Activated CD4-positive, alpha-beta memory T cell treated with anti-CD3 and anti-CD28 coated beads for 36 hours (primary cell): ENCODE measurements at regions of chr16 and their contacts with region 1.

Region 1: GRCh38 chr16:67935402-67936123 is 1.1 kb downstream of the PSMB10 start:
- DNase-seq: peak; percentile 98
- H3K4me3 Mint-ChIP-seq: peak overlapping the region; percentile 100
- H3K27ac Mint-ChIP-seq: peak overlapping the region; percentile 99
- H3K4me1 Mint-ChIP-seq: peaks cover 41% of the 10 kb centered on the region
- H3K27me3 Mint-ChIP-seq: no peaks in the 10 kb centered on the region

Region 2: GRCh38 chr16:67660564-67661028 is 275.0 kb before region 1 on chr16 and contains the start of gene PARD6A:
- CTCF ChIA-PET with region 1: no interaction called
- POLR2A ChIA-PET with region 1: no interaction called
- intact Hi-C with region 1: loop called (anchors 1 kb)
- DNase-seq: peak; percentile 98
- H3K4me3 Mint-ChIP-seq: peak within 1 kb of the TSS; percentile 86
- H3K27ac Mint-ChIP-seq: peak within 1 kb of the TSS; percentile 87
- H3K4me1 Mint-ChIP-seq: peaks cover 27% of the 10 kb centered on the region
- H3K27me3 Mint-ChIP-seq: no peaks in the 10 kb centered on the region
- total RNA-seq, gene PARD6A: 11.2 to 11.5 TPM

Region 3: GRCh38 chr16:67822511-67822910 is 113.1 kb before region 1 on chr16:
- CTCF ChIA-PET with region 1: no interaction called
- POLR2A ChIA-PET with region 1: no interaction called
- intact Hi-C with region 1: no loop called
- DNase-seq: no peak
- H3K4me3 Mint-ChIP-seq: no peak overlapping the region
- H3K27ac Mint-ChIP-seq: no peak overlapping the region
- H3K4me1 Mint-ChIP-seq: no peaks in the 10 kb centered on the region
- H3K27me3 Mint-ChIP-seq: no peaks in the 10 kb centered on the region

Region 4: DNA sequence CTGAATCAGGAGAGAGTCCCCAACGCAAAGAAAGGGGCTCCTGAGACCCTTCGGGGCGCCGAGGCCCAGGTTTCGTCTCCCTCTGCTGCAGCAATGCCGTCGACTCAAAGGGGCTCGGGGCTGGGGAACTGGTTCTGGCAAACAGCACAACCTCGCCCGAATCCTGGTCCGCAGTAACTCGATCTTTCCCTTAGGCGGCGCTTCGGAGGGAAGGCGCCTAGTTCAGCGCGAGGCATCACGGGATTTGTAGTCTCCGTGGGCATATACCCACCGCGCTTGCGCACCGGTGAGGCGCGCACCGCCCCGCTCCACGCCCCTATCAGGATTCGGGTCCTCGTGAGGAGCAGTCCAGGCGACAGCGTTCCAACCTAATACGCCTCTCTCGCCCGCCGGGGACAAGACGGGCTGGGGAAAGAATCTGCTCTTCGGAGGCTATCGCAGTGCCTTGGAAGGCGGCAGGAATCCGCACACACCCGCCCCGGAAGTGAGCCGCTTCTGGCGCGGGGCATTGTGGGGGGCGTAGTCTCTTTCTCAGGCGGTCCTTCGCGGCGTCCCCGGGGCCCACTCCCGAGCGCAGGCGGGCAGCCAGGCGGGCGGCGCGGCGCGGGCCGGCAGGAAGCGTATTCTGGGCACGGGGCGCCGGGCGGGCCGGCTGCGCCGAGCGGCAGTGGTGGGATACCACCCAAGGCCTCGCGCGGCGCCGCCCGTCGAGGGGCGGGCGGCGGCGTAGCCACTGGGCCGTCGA is 93.6 kb before region 1 on chr16 and contains the start of gene THAP11:
- CTCF ChIA-PET with region 1: interaction called, 3 read pairs
- POLR2A ChIA-PET with region 1: interaction called, 7 read pairs
- intact Hi-C with region 1: loop called (anchors 1 kb)
- DNase-seq: peak; percentile 97
- H3K4me3 Mint-ChIP-seq: peak within 1 kb of the TSS; percentile 90
- H3K27ac Mint-ChIP-seq: peak within 1 kb of the TSS; percentile 95
- H3K4me1 Mint-ChIP-seq: peaks cover 34% of the 10 kb centered on the region
- H3K27me3 Mint-ChIP-seq: no peaks in the 10 kb centered on the region
- total RNA-seq, gene THAP11: 31.8 to 32.1 TPM

Region 5: DNA sequence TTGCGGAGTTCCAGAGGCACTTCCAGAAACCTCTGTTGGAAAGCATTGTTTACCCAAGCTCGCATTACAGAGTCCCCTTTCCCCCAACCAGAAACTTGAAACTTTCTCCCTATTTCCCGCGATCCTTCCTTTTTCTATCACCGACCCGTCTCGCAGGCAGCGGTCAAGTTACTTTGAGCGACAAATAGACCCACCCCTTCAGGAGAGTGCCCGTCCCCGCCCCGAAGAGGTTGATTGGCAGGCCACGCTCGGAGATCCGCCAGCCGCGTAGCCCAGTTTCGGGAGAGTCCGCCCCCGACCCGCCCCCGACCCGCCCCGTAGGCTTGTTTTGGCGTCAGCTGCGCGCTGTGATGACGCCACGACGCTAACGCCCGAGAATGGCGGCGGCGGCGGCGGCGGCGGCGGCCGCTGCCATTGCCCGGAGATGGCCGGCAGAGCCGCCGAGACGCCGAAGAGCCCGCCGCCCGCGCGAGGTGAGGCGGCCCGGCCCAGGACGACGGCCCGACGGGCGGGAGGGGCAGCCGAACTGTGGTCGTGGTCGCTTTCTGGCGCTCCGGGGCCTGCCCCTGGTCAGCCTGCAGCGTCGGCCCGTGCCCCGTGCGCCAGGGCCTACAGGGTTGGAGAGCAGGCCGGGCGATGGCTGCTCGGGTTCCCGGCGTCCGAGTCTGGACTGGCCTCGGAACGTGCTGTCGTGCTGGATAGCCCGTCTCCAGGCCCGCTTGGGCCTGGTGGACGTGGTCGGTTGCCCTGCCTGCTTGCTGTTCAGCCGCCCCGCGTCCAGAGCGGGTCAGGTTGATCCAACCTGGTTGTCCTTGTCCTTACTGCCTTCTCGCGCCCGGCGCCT is 42.4 kb before region 1 on chr16 and contains the start of gene PSKH1:
- CTCF ChIA-PET with region 1: interaction called, 10 read pairs
- POLR2A ChIA-PET with region 1: interaction called, 18 read pairs
- intact Hi-C with region 1: loop called (anchors 1 kb)
- DNase-seq: peak; percentile 98
- H3K4me3 Mint-ChIP-seq: peak within 1 kb of the TSS; percentile 96
- H3K27ac Mint-ChIP-seq: peak within 1 kb of the TSS; percentile 89
- H3K4me1 Mint-ChIP-seq: peaks cover 29% of the 10 kb centered on the region
- H3K27me3 Mint-ChIP-seq: no peaks in the 10 kb centered on the region
- total RNA-seq, gene PSKH1: 10.0 to 11.7 TPM

Region 6: DNA sequence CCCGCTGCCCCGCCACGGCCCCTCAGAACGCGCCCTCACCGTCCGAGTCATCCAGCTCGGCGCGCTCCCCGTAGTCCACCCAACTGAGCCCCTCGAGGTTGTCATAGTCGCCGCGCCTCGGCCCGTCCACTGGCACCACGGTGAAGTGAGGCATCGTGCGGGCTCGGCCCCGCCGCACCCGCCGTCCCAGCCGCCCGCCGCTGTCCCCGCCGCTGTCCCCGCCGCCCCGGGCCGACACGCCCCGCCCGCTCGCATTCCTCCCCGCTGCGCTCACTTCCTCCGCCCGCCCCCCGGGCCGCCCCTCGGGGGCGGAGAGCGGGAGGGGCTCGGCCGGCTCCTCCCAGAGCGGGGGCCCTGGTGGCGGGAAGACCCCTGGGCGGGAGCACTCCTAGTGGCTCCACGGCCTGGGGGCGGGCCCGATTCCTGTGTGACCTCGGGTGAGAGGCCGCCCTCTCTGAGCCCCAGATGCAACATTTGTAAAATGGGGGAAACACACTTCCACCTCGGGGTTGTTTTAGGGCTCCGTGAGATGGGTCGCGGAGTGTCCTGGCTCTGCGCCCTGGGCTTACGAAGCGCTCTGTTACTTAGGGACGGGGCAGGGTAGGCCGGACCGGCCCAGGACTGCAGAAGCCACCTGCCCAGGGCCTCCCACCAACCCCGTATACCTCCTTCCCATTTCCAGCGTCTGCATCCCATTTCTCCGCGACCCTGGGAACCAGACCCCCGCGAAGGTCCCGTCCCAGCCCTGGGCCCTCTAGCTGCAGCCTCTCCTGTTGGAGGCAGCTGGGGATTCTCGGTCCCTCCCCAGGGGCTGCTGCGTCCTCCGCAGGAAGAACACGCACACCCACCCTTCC is 33.1 kb after region 1 on chr16 and contains the start of gene SLC12A4:
- CTCF ChIA-PET with region 1: interaction called, 3 read pairs
- POLR2A ChIA-PET with region 1: interaction called, 6 read pairs
- intact Hi-C with region 1: loop called (anchors 1 kb)
- DNase-seq: peak; percentile 94
- H3K4me3 Mint-ChIP-seq: peak within 1 kb of the TSS; percentile 99
- H3K27ac Mint-ChIP-seq: peak within 1 kb of the TSS; percentile 78
- H3K4me1 Mint-ChIP-seq: peaks cover 18% of the 10 kb centered on the region
- H3K27me3 Mint-ChIP-seq: no peaks in the 10 kb centered on the region
- total RNA-seq, gene SLC12A4: 27.1 to 29.9 TPM

Region 7: DNA sequence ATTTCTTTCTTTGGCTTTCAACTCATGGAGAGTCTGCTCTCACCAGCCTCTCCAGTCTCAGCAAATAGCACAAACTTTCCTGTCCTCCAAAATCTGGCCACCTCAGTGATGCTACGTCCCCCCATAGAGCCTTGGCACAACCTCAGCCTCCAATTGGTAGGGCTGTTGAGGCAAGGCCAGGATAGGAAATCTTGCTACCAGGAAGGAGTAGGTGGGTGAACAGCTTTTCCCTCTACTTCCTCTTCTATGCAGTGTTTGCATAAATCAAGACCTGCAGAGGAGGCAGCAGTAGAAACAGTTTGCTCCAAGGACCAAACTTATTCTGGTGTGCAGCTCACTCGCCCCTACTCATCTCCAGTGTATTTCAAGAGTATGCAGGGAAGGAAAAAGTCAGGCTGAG is 64.4 kb after region 1 on chr16:
- CTCF ChIA-PET with region 1: no interaction called
- POLR2A ChIA-PET with region 1: interaction called, 5 read pairs
- intact Hi-C with region 1: loop called (anchors 5 kb)
- DNase-seq: no peak
- H3K4me3 Mint-ChIP-seq: peak overlapping the region; percentile 72
- H3K27ac Mint-ChIP-seq: peak overlapping the region; percentile 88
- H3K4me1 Mint-ChIP-seq: peaks cover 52% of the 10 kb centered on the region
- H3K27me3 Mint-ChIP-seq: no peaks in the 10 kb centered on the region

Region 8: GRCh38 chr16:68040507-68041288 is 105.1 kb after region 1 on chr16:
- CTCF ChIA-PET with region 1: interaction called, 14 read pairs
- POLR2A ChIA-PET with region 1: no interaction called
- intact Hi-C with region 1: loop called (anchors 2 kb)
- DNase-seq: peak; percentile 94
- H3K4me3 Mint-ChIP-seq: no peak overlapping the region
- H3K27ac Mint-ChIP-seq: peak overlapping the region; percentile 65
- H3K4me1 Mint-ChIP-seq: peaks cover 6% of the 10 kb centered on the region
- H3K27me3 Mint-ChIP-seq: no peaks in the 10 kb centered on the region